Esophagus muscularis mucosa (tissue), 4 donors: ENCODE measurements at regions of chr1 and their contacts with region 1.

Region 1: GRCh38 chr1:19390901-19391595 is 78.9 kb downstream of the SLC66A1 start:
- DNase-seq: peak; percentile 95
- H3K4me3 ChIP-seq: peak overlapping the region; percentile 16 to 27 (median 18)
- H3K27ac ChIP-seq: peak overlapping the region; percentile 81 to 97 (median 84)
- H3K4me1 ChIP-seq: peaks cover 56 to 99% (median 94%) of the 10 kb centered on the region in 4 donors
- H3K27me3 ChIP-seq: no peaks in the 10 kb centered on the region
- CTCF ChIP-seq: peak; percentile 87 to 94 (median 88)
- EP300 ChIP-seq: no peak
- POLR2A ChIP-seq: no peak

Region 2: DNA sequence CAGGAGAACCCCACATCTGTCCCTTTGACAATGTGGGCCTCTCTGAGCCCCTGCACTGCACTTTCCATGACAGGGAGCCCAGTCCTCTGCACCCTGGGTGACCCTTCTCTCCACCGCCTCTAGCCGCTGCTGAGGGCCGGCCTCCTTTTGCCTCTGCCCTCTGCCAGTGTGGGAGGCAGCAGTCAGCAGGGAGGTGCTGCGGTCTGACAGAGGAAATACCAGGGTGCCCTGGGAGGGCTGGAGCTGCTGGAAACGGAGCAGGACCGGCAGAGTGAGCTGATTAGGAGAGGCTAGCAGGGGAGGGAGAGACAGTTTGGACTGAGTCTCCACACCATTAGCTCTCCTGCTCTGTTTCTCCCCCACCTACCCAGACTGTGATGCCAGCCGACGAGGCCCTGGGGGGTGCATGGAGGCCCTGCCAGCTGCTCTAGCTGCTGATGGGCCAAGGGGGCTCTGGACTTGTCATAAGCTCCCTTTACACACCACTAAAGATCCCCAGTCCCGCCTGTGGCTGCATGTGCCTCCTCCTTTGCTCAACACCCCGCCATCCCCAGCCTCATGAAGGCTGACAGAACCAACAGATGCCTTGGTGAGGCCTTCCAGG is 1081.4 kb before region 1 on chr1:
- intact Hi-C with region 1: no loop called
- DNase-seq: no peak
- H3K4me3 ChIP-seq: no peak overlapping the region
- H3K27ac ChIP-seq: no peak overlapping the region
- H3K4me1 ChIP-seq: no peaks in the 10 kb centered on the region
- H3K27me3 ChIP-seq: peaks cover 0 to 39% (median 0%) of the 10 kb centered on the region in 4 donors
- CTCF ChIP-seq: no peak
- EP300 ChIP-seq: no peak
- POLR2A ChIP-seq: no peak

Region 3: GRCh38 chr1:19439464-19440171 is 48.6 kb after region 1 on chr1:
- intact Hi-C with region 1: no loop called
- DNase-seq: no peak
- H3K4me3 ChIP-seq: no peak overlapping the region
- H3K27ac ChIP-seq: peak overlapping the region; percentile 88 to 97 (median 92)
- H3K4me1 ChIP-seq: peaks cover 97 to 100% (median 100%) of the 10 kb centered on the region in 4 donors
- H3K27me3 ChIP-seq: no peaks in the 10 kb centered on the region
- CTCF ChIP-seq: peak; percentile 28 to 41 (median 41)
- EP300 ChIP-seq: peak; percentile 31
- POLR2A ChIP-seq: no peak

Region 4: GRCh38 chr1:19477284-19478249 is 86.5 kb after region 1 on chr1:
- intact Hi-C with region 1: loop called (anchors 5 kb)
- DNase-seq: no peak
- H3K4me3 ChIP-seq: peak overlapping the region in 1 of 4 donors; percentile 16
- H3K27ac ChIP-seq: peak overlapping the region; percentile 49 to 100 (median 83)
- H3K4me1 ChIP-seq: peaks cover 82 to 100% (median 99%) of the 10 kb centered on the region in 4 donors
- H3K27me3 ChIP-seq: no peaks in the 10 kb centered on the region
- CTCF ChIP-seq: no peak
- EP300 ChIP-seq: no peak
- POLR2A ChIP-seq: no peak

Region 5: DNA sequence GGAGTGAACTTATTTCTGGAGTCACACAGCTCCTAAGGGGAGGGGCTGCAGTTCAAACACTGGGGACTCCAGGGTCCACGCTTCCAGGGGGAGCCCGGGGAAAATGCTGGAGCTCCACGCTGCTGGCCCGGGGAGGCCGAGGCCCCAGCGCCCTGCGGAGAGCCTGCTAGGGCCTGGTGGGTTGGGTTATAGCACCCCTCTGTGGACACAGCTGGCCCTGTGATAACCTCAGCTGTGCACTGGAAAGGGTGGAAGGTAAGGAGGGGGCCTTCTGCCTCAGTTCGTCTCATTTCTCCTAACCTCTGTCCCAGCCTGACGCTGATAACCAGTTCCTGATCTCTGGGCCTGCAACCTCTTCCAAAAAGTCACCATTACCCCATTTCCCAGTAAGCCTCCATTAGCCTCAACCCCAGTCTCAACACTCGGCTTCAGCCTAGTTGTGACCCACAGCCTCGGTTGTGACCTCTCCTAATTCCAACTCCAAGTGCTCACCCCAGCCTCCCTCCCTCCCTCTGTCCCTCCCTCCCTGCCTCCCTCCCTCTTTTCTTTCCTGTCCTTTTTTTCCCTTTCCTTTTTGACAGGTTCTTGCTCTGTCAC is 260.2 kb after region 1 on chr1:
- intact Hi-C with region 1: loop called (anchors 2 kb)
- DNase-seq: no peak
- H3K4me3 ChIP-seq: peak overlapping the region; percentile 1 to 25 (median 6)
- H3K27ac ChIP-seq: peak overlapping the region; percentile 97 to 99 (median 98)
- H3K4me1 ChIP-seq: peaks cover 74 to 99% (median 97%) of the 10 kb centered on the region in 4 donors
- H3K27me3 ChIP-seq: no peaks in the 10 kb centered on the region
- CTCF ChIP-seq: peak; percentile 58 to 71 (median 71)
- EP300 ChIP-seq: no peak
- POLR2A ChIP-seq: no peak

Region 6: GRCh38 chr1:19750101-19750881 is 359.2 kb after region 1 on chr1:
- intact Hi-C with region 1: no loop called
- DNase-seq: no peak
- H3K4me3 ChIP-seq: no peak overlapping the region
- H3K27ac ChIP-seq: no peak overlapping the region
- H3K4me1 ChIP-seq: peaks cover 0 to 19% (median 15%) of the 10 kb centered on the region in 4 donors
- H3K27me3 ChIP-seq: no peaks in the 10 kb centered on the region
- CTCF ChIP-seq: no peak
- EP300 ChIP-seq: no peak
- POLR2A ChIP-seq: no peak